Activated naive CD4-positive, alpha-beta T cell treated with anti-CD3 and anti-CD28 coated beads, Interleukin-2, amount 10 ng/mL, durations not matched to agents 7 days and 5 days (primary cell): ENCODE measurements at regions of chr12 and their contacts with region 1.

Region 1: DNA sequence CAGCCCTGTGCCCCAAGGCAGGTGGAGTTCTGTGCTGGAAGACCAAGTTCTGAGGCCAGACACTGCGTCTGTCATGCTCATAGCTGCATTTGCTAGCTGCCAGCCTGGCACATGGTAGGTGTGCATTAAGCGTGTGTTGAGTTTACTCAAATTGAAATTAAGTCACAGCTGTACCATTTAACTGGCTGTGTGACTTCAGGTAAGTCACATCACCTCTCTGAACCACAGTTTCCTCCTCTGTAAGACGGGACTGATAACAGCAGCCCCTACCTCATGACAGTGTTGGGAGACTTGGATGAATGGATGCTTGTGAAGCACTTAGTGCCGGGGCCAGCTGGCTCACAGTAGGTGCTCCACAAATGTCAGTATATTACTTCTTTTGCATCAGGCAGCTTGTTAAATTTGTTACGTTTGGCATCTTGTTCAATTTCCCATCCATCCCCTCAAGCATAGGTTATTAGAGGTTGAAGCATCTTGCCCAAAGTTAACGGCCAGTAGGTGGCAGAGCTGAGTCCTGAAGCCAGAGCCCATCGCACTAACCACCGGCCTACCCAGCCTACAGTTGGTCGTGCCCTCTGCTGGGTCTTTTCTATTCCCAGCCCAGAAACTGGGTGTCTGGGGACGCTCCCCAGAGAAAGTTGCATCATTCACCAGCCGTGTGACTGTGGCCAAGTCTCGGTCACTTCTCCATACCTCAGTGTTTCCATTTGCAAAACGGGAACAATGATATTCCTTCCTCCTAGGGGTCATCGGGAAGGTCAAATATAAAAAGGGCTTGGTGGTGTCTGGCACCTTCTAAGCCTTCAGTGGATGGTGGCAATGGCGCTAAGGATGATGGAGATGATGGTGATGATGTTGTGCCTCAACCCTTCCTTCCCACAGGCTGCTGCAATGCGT is 4.5 kb downstream of the DAO start:
- DNase-seq: peak; percentile 79
- H3K4me3 Mint-ChIP-seq: no peak overlapping the region
- H3K27ac Mint-ChIP-seq: no peak overlapping the region
- H3K4me1 Mint-ChIP-seq: no peaks in the 10 kb centered on the region
- H3K27me3 Mint-ChIP-seq: peaks cover 20% of the 10 kb centered on the region

Region 2: GRCh38 chr12:108905725-108906124 is 21.4 kb after region 1 on chr12:
- CTCF ChIA-PET with region 1: no interaction called
- DNase-seq: no peak
- H3K4me3 Mint-ChIP-seq: no peak overlapping the region
- H3K27ac Mint-ChIP-seq: no peak overlapping the region
- H3K4me1 Mint-ChIP-seq: no peaks in the 10 kb centered on the region
- H3K27me3 Mint-ChIP-seq: peaks cover 36% of the 10 kb centered on the region

Region 3: GRCh38 chr12:108950991-108951739 is 66.8 kb after region 1 on chr12:
- CTCF ChIA-PET with region 1: interaction called, 12 read pairs
- DNase-seq: peak; percentile 81
- H3K4me3 Mint-ChIP-seq: no peak overlapping the region
- H3K27ac Mint-ChIP-seq: no peak overlapping the region
- H3K4me1 Mint-ChIP-seq: peaks cover 2% of the 10 kb centered on the region
- H3K27me3 Mint-ChIP-seq: peaks cover 23% of the 10 kb centered on the region

Region 4: GRCh38 chr12:109093022-109093918 is 208.9 kb after region 1 on chr12 and contains the start of gene ALKBH2:
- CTCF ChIA-PET with region 1: interaction called, 19 read pairs
- DNase-seq: peak; percentile 95
- H3K4me3 Mint-ChIP-seq: peak within 1 kb of the TSS; percentile 76
- H3K27ac Mint-ChIP-seq: peak within 1 kb of the TSS; percentile 83
- H3K4me1 Mint-ChIP-seq: peaks cover 42% of the 10 kb centered on the region
- H3K27me3 Mint-ChIP-seq: no peaks in the 10 kb centered on the region